PC-9 (cell line): ENCODE measurements at regions of chr21 and their contacts with region 1.

Region 1: GRCh38 chr21:21860888-21861287 is 862.7 kb downstream of the NCAM2 start:
- DNase-seq: no peak
- H3K4me3 ChIP-seq: no peak overlapping the region
- H3K27ac ChIP-seq: no peak overlapping the region
- H3K4me1 ChIP-seq: no peaks in the 10 kb centered on the region
- H3K27me3 ChIP-seq: no peaks in the 10 kb centered on the region
- CTCF ChIP-seq: no peak

Region 2: DNA sequence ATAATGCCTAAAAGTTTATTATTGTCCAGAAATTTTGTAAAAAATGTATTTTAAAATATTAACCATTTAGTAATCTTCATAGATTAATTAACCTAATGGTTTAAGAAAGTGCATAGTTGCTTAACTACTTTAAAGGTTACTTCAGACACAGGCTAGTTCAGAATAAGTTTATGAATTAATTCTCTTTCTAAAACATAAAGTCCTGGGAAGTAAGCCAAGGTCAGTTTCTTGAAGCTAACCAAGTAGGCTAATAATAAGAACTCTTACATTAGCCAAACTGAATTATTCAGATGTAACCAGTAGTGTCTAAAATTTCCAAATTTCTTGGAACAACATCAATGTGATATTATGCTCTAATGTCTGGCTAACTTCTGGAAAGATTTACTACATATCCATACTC is 72.3 kb before region 1 on chr21:
- CTCF ChIA-PET with region 1: interaction called, 3 read pairs
- POLR2A ChIA-PET with region 1: no interaction called
- intact Hi-C with region 1: loop called (anchors 2 kb)
- DNase-seq: no peak
- H3K4me3 ChIP-seq: no peak overlapping the region
- H3K27ac ChIP-seq: no peak overlapping the region
- H3K4me1 ChIP-seq: no peaks in the 10 kb centered on the region
- H3K27me3 ChIP-seq: no peaks in the 10 kb centered on the region
- CTCF ChIP-seq: no peak